ENCODE measurements at regions of chr2 and their contacts with region 1.

Region 1: GRCh38 chr2:174341286-174341994 is 6.7 kb downstream of the SP9 start:
- DNase-seq: peak; percentile 78 to 90 (median 86)
- ATAC-seq: peak; percentile 87
- H3K4me3 ChIP-seq: no peak overlapping the region
- H3K4me3 Mint-ChIP-seq: peak overlapping the region; percentile 66 to 86 (median 79)
- H3K27ac ChIP-seq: no peak overlapping the region
- H3K27ac Mint-ChIP-seq: peak overlapping the region in 8 of 9 donors; percentile 73 to 93 (median 87)
- H3K4me1 ChIP-seq: peaks cover 22 to 32% of the 10 kb centered on the region in 2 donors
- H3K4me1 Mint-ChIP-seq: peaks cover 15 to 53% (median 39%) of the 10 kb centered on the region in 7 donors
- H3K27me3 ChIP-seq: peaks cover 47 to 64% of the 10 kb centered on the region in 2 donors
- H3K27me3 Mint-ChIP-seq: peaks cover 49 to 78% (median 71%) of the 10 kb centered on the region in 5 donors

Region 2: GRCh38 chr2:172806493-172806892 is 1534.9 kb before region 1 on chr2:
- CTCF ChIA-PET with region 1: no interaction called
- POLR2A ChIA-PET with region 1: no interaction called
- intact Hi-C with region 1: loop called in 1 of 2 experiments (anchors 10 kb)
- DNase-seq: peak in 5 of 9 donors; percentile 22 to 32 (median 26)
- ATAC-seq: no peak
- H3K4me3 ChIP-seq: no peak overlapping the region
- H3K4me3 Mint-ChIP-seq: no peak overlapping the region
- H3K27ac ChIP-seq: no peak overlapping the region
- H3K27ac Mint-ChIP-seq: no peak overlapping the region
- H3K4me1 ChIP-seq: no peaks in the 10 kb centered on the region
- H3K4me1 Mint-ChIP-seq: peaks cover 0 to 8% (median 0%) of the 10 kb centered on the region in 7 donors
- H3K27me3 ChIP-seq: no peaks in the 10 kb centered on the region
- H3K27me3 Mint-ChIP-seq: peaks cover 0 to 15% (median 0%) of the 10 kb centered on the region in 5 donors

Region 3: GRCh38 chr2:173210270-173211196 is 1130.9 kb before region 1 on chr2:
- CTCF ChIA-PET with region 1: no interaction called
- POLR2A ChIA-PET with region 1: no interaction called
- intact Hi-C with region 1: loop called in 1 of 2 experiments (anchors 5 kb)
- DNase-seq: peak in 7 of 9 donors; percentile 10 to 59 (median 39)
- ATAC-seq: peak; percentile 88
- H3K4me3 ChIP-seq: no peak overlapping the region
- H3K4me3 Mint-ChIP-seq: no peak overlapping the region
- H3K27ac ChIP-seq: no peak overlapping the region
- H3K27ac Mint-ChIP-seq: no peak overlapping the region
- H3K4me1 ChIP-seq: no peaks in the 10 kb centered on the region
- H3K4me1 Mint-ChIP-seq: peaks cover 0 to 2% (median 0%) of the 10 kb centered on the region in 7 donors
- H3K27me3 ChIP-seq: no peaks in the 10 kb centered on the region
- H3K27me3 Mint-ChIP-seq: peaks cover 2 to 21% (median 14%) of the 10 kb centered on the region in 5 donors

Region 4: GRCh38 chr2:173571021-173571882 is 770.2 kb before region 1 on chr2:
- CTCF ChIA-PET with region 1: no interaction called
- POLR2A ChIA-PET with region 1: no interaction called
- intact Hi-C with region 1: loop called (anchors 1 to 10 kb)
- DNase-seq: no peak
- ATAC-seq: no peak
- H3K4me3 ChIP-seq: no peak overlapping the region
- H3K4me3 Mint-ChIP-seq: no peak overlapping the region
- H3K27ac ChIP-seq: no peak overlapping the region
- H3K27ac Mint-ChIP-seq: peak overlapping the region in 1 of 9 donors; percentile 1
- H3K4me1 ChIP-seq: no peaks in the 10 kb centered on the region
- H3K4me1 Mint-ChIP-seq: peaks cover 0 to 7% (median 5%) of the 10 kb centered on the region in 7 donors
- H3K27me3 ChIP-seq: no peaks in the 10 kb centered on the region
- H3K27me3 Mint-ChIP-seq: peaks cover 10 to 26% (median 19%) of the 10 kb centered on the region in 5 donors

Region 5: GRCh38 chr2:174138161-174138560 is 203.3 kb before region 1 on chr2:
- CTCF ChIA-PET with region 1: interaction called, 4 read pairs
- POLR2A ChIA-PET with region 1: no interaction called
- intact Hi-C with region 1: loop called in 1 of 2 experiments (anchors 1 kb)
- DNase-seq: no peak
- ATAC-seq: no peak
- H3K4me3 ChIP-seq: no peak overlapping the region
- H3K4me3 Mint-ChIP-seq: no peak overlapping the region
- H3K27ac ChIP-seq: no peak overlapping the region
- H3K27ac Mint-ChIP-seq: no peak overlapping the region
- H3K4me1 ChIP-seq: no peaks in the 10 kb centered on the region
- H3K4me1 Mint-ChIP-seq: peaks cover 0 to 4% (median 0%) of the 10 kb centered on the region in 7 donors
- H3K27me3 ChIP-seq: no peaks in the 10 kb centered on the region
- H3K27me3 Mint-ChIP-seq: no peaks in the 10 kb centered on the region

Region 6: DNA sequence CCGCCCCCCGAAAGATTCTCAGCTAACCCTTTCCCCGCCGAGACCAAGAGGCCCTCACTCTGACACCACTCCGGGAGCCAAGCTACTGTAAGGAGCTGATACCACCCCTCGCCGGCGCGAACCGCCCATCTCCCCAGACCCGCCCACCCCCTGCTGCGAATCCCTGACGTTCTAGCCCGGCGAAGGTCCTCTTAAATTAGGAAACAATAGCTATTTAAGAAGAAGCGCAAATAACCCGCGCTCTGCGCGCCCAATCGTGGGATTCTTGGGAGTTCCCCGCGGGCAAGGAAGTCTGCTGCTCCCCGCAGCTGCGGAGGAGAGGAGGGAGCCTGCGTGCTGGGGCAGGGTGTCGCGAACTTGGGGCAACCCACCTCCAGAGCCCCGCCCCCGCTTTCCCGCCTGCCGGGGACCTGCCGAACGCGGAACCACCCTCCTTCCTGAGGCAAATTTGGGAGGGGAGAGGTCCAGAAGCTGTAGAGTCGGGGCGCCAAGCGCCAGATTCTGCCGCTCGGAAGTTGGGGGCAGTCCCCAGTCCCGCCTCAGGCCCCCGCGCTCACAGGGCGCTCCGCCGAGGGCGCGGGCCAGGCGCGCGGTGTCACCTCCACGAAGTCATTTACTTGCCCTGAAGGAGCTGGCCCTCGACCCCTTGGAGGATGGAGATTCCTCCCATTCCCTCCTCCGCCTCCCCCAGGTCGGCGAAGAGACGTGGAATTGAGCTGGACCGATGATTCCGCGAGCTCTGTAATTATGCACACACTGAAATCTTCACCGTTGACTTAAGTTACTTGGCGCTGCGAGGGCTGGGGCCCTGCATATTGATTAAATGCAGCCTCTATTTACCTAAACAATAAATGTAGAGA is 15.0 kb before region 1 on chr2:
- CTCF ChIA-PET with region 1: interaction called, 11 read pairs
- POLR2A ChIA-PET with region 1: no interaction called
- intact Hi-C with region 1: loop called in 1 of 2 experiments (anchors 1 kb)
- DNase-seq: peak in 4 of 9 donors; percentile 24 to 52 (median 32)
- ATAC-seq: peak; percentile 43
- H3K4me3 ChIP-seq: peak overlapping the region; percentile 31
- H3K4me3 Mint-ChIP-seq: peak overlapping the region; percentile 75 to 86 (median 82)
- H3K27ac ChIP-seq: no peak overlapping the region
- H3K27ac Mint-ChIP-seq: peak overlapping the region in 3 of 9 donors; percentile 1 to 39 (median 4)
- H3K4me1 ChIP-seq: peaks cover 13 to 15% of the 10 kb centered on the region in 2 donors
- H3K4me1 Mint-ChIP-seq: peaks cover 15 to 37% (median 23%) of the 10 kb centered on the region in 7 donors
- H3K27me3 ChIP-seq: peaks cover 45 to 55% of the 10 kb centered on the region in 2 donors
- H3K27me3 Mint-ChIP-seq: peaks cover 85 to 95% (median 86%) of the 10 kb centered on the region in 5 donors

Region 7: DNA sequence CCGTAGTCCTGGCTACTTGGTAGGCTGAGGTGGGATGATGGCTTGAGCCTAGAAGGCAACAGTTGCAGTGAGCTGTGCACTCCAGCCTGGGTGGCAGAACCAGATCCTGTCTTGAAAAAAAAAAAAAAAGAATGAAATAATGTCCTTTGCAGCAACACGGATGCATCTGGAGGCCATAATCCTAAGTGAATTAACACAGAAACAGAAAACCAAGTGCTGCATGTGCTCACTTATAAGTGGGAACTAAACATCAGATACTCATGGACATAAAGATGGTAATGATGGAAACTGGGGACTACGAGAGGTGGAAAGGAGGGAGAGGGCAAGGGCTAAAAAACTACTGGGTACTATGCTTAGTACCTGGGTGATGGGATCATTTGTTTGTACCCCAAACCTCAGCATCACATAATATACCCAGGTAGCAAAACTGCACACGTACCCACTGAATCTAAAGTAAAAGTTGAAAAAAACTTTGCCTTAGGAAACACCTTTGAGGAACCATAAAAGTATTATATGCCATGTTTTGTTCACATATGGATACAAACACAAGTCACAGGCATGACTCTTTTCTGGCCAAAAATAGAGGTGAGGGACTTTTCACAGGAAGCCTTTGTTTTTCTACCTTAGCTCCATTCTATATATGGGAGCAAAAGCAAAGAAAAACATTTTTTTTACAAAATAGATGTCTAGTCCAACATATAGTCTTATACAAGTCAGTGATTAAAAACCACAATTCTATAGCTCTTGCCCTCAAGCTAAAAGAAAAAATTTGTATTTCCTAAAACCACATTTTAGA is 108.8 kb after region 1 on chr2:
- CTCF ChIA-PET with region 1: no interaction called
- POLR2A ChIA-PET with region 1: no interaction called
- intact Hi-C with region 1: no loop called
- DNase-seq: peak in 4 of 9 donors; percentile 7 to 19 (median 10)
- ATAC-seq: peak; percentile 60
- H3K4me3 ChIP-seq: no peak overlapping the region
- H3K4me3 Mint-ChIP-seq: peak overlapping the region in 6 of 10 donors; percentile 5 to 70 (median 38)
- H3K27ac ChIP-seq: no peak overlapping the region
- H3K27ac Mint-ChIP-seq: peak overlapping the region; percentile 19 to 87 (median 54)
- H3K4me1 ChIP-seq: peaks cover 0 to 5% of the 10 kb centered on the region in 2 donors
- H3K4me1 Mint-ChIP-seq: peaks cover 5 to 27% (median 13%) of the 10 kb centered on the region in 7 donors
- H3K27me3 ChIP-seq: no peaks in the 10 kb centered on the region
- H3K27me3 Mint-ChIP-seq: no peaks in the 10 kb centered on the region

Region 8: GRCh38 chr2:176088048-176088936 is 1746.9 kb after region 1 on chr2:
- CTCF ChIA-PET with region 1: no interaction called
- POLR2A ChIA-PET with region 1: no interaction called
- intact Hi-C with region 1: loop called in 1 of 2 experiments (anchors 10 kb)
- DNase-seq: no peak
- ATAC-seq: peak; percentile 49
- H3K4me3 ChIP-seq: no peak overlapping the region
- H3K4me3 Mint-ChIP-seq: peak overlapping the region; percentile 17 to 79 (median 64)
- H3K27ac ChIP-seq: no peak overlapping the region
- H3K27ac Mint-ChIP-seq: peak overlapping the region in 6 of 9 donors; percentile 14 to 98 (median 40)
- H3K4me1 ChIP-seq: peaks cover 0 to 3% of the 10 kb centered on the region in 2 donors
- H3K4me1 Mint-ChIP-seq: peaks cover 6 to 34% (median 18%) of the 10 kb centered on the region in 7 donors
- H3K27me3 ChIP-seq: peaks cover 30 to 83% of the 10 kb centered on the region in 2 donors
- H3K27me3 Mint-ChIP-seq: peaks cover 79 to 91% (median 82%) of the 10 kb centered on the region in 5 donors

Measured in naive thymus-derived CD4-positive, alpha-beta T cell (primary cell).